Kidney (tissue), 22 donors: ENCODE measurements at regions of chr3 and their contacts with region 1.

Region 1: GRCh38 chr3:102532901-102533300 is 98.1 kb downstream of the ZPLD1 start:
- DNase-seq: no peak
- H3K4me3 ChIP-seq: no peak overlapping the region
- H3K27ac ChIP-seq: no peak overlapping the region
- H3K4me1 ChIP-seq: no peaks in the 10 kb centered on the region
- H3K27me3 ChIP-seq: no peaks in the 10 kb centered on the region
- CTCF ChIP-seq: no peak

Region 2: GRCh38 chr3:102233881-102234280 is 299.0 kb before region 1 on chr3:
- intact Hi-C with region 1: loop called (anchors 5 kb)
- DNase-seq: peak in 2 of 5 donors; percentile 58 to 64
- H3K4me3 ChIP-seq: no peak overlapping the region
- H3K27ac ChIP-seq: no peak overlapping the region
- H3K4me1 ChIP-seq: peaks cover 0 to 6% (median 0%) of the 10 kb centered on the region in 3 donors
- H3K27me3 ChIP-seq: no peaks in the 10 kb centered on the region
- CTCF ChIP-seq: no peak

Region 3: DNA sequence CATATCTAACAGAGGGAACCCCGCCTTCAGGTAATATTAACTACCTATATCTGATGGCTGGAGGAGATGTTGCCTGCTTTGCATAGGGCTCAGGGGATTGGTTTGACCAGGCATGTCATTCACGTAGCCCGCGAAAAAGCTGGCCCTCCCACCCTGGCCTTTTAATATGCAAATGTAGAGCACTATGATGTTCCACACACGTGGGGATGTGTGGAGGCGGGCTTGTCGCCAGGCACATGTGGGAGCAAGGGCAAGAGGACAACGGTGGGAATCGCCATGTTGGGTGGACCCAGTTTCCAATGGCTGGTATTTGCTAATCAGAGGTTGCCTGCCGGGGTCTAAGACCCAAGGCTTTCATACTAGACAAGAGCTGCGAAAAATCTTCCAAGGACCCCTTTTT is 371.7 kb after region 1 on chr3:
- intact Hi-C with region 1: no loop called
- DNase-seq: peak in 1 of 5 donors; percentile 31
- H3K4me3 ChIP-seq: no peak overlapping the region
- H3K27ac ChIP-seq: no peak overlapping the region
- H3K4me1 ChIP-seq: no peaks in the 10 kb centered on the region
- H3K27me3 ChIP-seq: no peaks in the 10 kb centered on the region
- CTCF ChIP-seq: no peak